Adrenal gland (tissue), 19 donors: ENCODE measurements at regions of chr15 and their contacts with region 1.

Region 1: DNA sequence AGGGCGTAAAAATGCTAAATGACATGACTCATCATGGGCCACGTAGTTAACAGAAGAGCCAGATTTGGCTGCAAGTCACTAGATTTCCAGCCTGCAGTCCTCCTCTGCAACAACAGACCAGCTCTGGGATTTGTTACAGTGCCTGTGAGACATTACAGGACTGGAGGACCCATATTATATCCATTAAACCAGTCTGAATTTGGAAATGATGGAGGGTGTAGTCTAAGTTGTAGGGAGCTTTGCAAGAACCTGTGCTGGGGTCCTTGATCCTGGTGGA is 10.8 kb downstream of the ZNF774 start:
- DNase-seq: peak; percentile 49 to 80 (median 72)
- H3K4me3 ChIP-seq: no peak overlapping the region
- H3K27ac ChIP-seq: peak overlapping the region; percentile 34 to 96 (median 86)
- H3K4me1 ChIP-seq: peaks cover 18 to 26% of the 10 kb centered on the region in 2 donors
- H3K27me3 ChIP-seq: no peaks in the 10 kb centered on the region
- CTCF ChIP-seq: no peak
- POLR2A ChIP-seq: peak in 1 of 2 donors; percentile 55

Region 2: DNA sequence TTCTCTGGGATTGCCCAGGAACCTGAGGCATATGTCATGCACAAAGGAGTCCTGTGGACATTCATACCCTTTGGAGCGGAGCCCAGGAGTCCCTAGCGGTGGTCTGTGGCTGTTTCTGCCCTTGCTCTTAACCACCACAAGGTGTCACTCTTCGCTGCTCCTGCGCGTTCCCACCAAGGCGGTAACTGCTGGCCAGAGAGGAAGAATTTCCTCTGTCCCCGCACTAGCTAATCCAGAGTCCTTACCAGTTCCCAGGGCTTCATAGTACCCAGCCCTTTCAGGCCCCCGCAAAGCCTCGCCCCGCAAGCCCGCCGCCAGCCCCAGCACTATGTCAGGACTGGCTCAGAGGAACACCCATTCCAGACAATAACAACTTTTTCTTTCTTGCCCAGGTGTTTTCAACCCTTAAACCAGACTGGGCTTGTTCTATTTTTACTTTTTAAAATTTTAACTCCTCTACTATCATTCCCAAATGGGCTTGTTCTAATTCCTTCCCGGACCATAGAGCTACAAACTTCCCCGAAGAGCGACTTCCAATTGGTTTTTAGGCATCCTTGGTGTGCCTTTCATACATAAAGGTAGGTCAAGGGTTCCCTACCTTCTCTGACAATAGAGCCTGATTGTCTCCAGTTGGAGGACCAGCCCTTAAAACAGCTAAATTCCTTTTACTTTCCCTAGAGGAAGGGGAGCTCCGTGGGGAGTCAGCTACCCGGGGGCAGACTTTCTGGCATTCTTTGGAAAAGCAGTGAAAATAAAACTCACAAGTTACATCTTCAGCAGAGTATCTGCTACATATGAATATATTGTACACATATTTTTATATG is 42.6 kb before region 1 on chr15:
- intact Hi-C with region 1: no loop called
- DNase-seq: peak; percentile 80 to 94 (median 90)
- H3K4me3 ChIP-seq: no peak overlapping the region
- H3K27ac ChIP-seq: no peak overlapping the region
- H3K4me1 ChIP-seq: peaks cover 10 to 19% of the 10 kb centered on the region in 2 donors
- H3K27me3 ChIP-seq: no peaks in the 10 kb centered on the region
- CTCF ChIP-seq: peak; percentile 96 to 100 (median 100)
- POLR2A ChIP-seq: no peak

Region 3: DNA sequence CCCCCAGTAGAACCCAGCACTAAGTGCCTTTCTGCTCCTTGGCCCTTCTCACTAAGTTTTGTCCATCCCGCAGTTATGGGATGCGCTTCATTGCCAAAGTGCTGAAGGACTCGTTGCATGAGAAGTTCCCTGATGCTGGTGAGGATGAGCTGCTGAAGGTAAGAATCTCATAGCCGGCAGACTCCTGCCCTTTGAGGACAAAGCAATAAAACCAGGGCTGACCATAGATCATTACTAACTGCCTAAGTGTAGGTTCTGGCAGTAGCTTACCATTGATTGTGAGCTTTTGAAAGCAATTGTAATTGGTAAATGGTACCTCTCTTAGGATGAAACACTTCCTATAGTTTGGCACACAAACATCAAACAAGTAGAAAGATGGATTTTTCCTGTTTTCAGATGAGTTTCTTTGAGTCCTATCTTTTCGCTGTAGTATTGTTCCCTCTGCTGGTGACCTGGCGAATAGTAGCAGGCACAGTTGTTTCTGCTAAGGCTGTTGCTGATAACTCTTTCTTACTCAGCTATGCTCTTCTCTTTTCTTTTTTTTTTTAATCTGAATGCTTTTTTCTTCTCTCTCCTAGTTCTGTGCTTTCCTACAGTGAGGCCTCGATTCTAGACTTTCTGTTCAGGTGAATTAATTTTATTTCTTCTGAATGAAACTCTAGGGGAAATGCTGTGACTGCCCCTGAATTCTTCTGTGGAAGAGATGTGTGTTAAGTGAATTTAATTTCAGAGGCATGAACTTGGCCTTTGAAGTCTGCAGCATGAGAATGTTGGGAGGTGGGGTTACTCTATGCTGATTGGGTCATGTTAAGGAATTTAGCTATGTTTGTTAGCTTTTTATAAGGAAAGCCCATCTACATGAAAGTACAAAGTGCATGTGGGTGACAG is 119.5 kb after region 1 on chr15:
- intact Hi-C with region 1: loop called in 1 of 2 experiments (anchors 5 kb)
- DNase-seq: peak; percentile 32 to 87 (median 55)
- H3K4me3 ChIP-seq: no peak overlapping the region
- H3K27ac ChIP-seq: no peak overlapping the region
- H3K4me1 ChIP-seq: no peaks in the 10 kb centered on the region
- H3K27me3 ChIP-seq: no peaks in the 10 kb centered on the region
- CTCF ChIP-seq: peak; percentile 58 to 92 (median 84)
- POLR2A ChIP-seq: no peak